ENCODE measurements at regions of chr20 and their contacts with region 1.

Region 1: GRCh38 chr20:32743237-32744112 is at the start of gene COMMD7:
- DNase-seq: peak; percentile 86
- H3K4me3 ChIP-seq: peak within 1 kb of the TSS; percentile 94
- H3K27ac ChIP-seq: peak within 1 kb of the TSS; percentile 57
- H3K4me1 ChIP-seq: peaks cover 35% of the 10 kb centered on the region
- CTCF ChIP-seq: no peak
- total RNA-seq, gene COMMD7: 20.3 and 22.2 TPM in 2 replicates

Region 2: GRCh38 chr20:32497589-32498224 is 245.8 kb before region 1 on chr20:
- CTCF ChIA-PET with region 1: no interaction called
- POLR2A ChIA-PET with region 1: no interaction called
- intact Hi-C with region 1: no loop called
- DNase-seq: no peak
- H3K4me3 ChIP-seq: no peak overlapping the region
- H3K27ac ChIP-seq: no peak overlapping the region
- H3K4me1 ChIP-seq: no peaks in the 10 kb centered on the region
- CTCF ChIP-seq: no peak

Region 3: GRCh38 chr20:32674362-32674789 is 69.1 kb before region 1 on chr20:
- CTCF ChIA-PET with region 1: no interaction called
- POLR2A ChIA-PET with region 1: interaction called, 7 read pairs
- intact Hi-C with region 1: loop called (anchors 1 kb)
- DNase-seq: peak; percentile 83
- H3K4me3 ChIP-seq: no peak overlapping the region
- H3K27ac ChIP-seq: peak overlapping the region; percentile 96
- H3K4me1 ChIP-seq: peaks cover 72% of the 10 kb centered on the region
- CTCF ChIP-seq: peak; percentile 98

Region 4: GRCh38 chr20:32762149-32762753 is 18.8 kb after region 1 on chr20 and contains the start of gene DNMT3B:
- CTCF ChIA-PET with region 1: interaction called, 3 read pairs
- POLR2A ChIA-PET with region 1: interaction called, 13 read pairs
- intact Hi-C with region 1: loop called (anchors 1 kb)
- DNase-seq: peak; percentile 91
- H3K4me3 ChIP-seq: peak within 1 kb of the TSS; percentile 81
- H3K27ac ChIP-seq: peak within 1 kb of the TSS; percentile 58
- H3K4me1 ChIP-seq: peaks cover 33% of the 10 kb centered on the region
- CTCF ChIP-seq: peak; percentile 26; the same call in 1 of the 2 replicates
- total RNA-seq, gene DNMT3B: 11.4 and 12.1 TPM in 2 replicates

Region 5: DNA sequence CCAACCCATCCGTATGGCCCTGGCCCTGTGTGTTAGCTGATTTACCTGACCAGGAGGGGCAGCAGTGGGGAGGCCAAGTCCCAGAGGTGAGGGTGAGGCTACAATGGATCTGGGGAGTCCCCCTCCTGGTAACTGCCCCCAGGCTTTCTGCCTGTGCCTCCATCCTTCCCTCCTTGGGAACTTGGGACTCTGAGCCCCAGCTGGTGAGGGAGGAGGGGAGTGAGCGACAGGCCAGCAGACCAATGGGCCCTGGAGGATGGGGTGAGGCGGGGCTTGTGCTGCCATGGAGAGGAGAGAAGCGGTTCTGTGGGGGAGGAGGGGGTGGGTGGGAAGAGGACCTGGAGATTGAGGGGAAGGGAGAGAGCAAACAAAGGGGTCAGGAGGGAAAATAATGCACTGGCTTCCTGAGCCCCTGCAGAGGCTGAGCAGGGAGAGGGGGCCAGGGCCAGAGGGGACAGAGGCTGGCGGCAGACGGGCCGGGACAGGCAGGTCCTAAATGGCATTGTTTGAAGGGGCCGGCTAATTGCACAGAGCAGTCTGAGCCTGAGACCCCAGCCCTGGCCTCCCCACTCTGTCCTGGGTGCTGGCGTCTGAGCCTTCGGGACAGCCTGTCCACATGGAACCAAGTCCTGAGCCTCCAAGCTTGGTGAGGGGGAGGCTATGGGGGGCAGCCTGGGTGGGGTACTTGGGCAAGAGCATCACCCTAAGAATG is 36.2 kb after region 1 on chr20:
- CTCF ChIA-PET with region 1: interaction called, 13 read pairs
- POLR2A ChIA-PET with region 1: interaction called, 5 read pairs
- intact Hi-C with region 1: loop called (anchors 1 kb)
- DNase-seq: no peak
- H3K4me3 ChIP-seq: no peak overlapping the region
- H3K27ac ChIP-seq: no peak overlapping the region
- H3K4me1 ChIP-seq: no peaks in the 10 kb centered on the region
- CTCF ChIP-seq: no peak